Heart left ventricle (tissue), 16 donors: ENCODE measurements at regions of chr3 and their contacts with region 1.

Region 1: GRCh38 chr3:160929595-160929994 is 173.6 kb downstream of the PPM1L start:
- DNase-seq: peak; percentile 46 to 71 (median 67)
- ATAC-seq: peak; percentile 90 to 97 (median 92)
- H3K4me3 ChIP-seq: no peak overlapping the region
- H3K27ac ChIP-seq: no peak overlapping the region
- H3K4me1 ChIP-seq: peaks cover 0 to 31% (median 5%) of the 10 kb centered on the region in 12 donors
- H3K27me3 ChIP-seq: no peaks in the 10 kb centered on the region
- CTCF ChIP-seq: peak in 8 of 12 donors; percentile 10 to 53 (median 41)
- POLR2A ChIP-seq: no peak

Region 2: GRCh38 chr3:160707187-160707794 is 222.3 kb before region 1 on chr3:
- intact Hi-C with region 1: loop called in 1 of 10 experiments (anchors 5 kb)
- DNase-seq: peak in 2 of 5 donors; percentile 31 to 43
- ATAC-seq: peak; percentile 58 to 85 (median 72)
- H3K4me3 ChIP-seq: no peak overlapping the region
- H3K27ac ChIP-seq: no peak overlapping the region
- H3K4me1 ChIP-seq: peaks cover 0 to 3% (median 0%) of the 10 kb centered on the region in 12 donors
- H3K27me3 ChIP-seq: no peaks in the 10 kb centered on the region
- CTCF ChIP-seq: peak; percentile 43 to 78 (median 61)
- POLR2A ChIP-seq: no peak

Region 3: DNA sequence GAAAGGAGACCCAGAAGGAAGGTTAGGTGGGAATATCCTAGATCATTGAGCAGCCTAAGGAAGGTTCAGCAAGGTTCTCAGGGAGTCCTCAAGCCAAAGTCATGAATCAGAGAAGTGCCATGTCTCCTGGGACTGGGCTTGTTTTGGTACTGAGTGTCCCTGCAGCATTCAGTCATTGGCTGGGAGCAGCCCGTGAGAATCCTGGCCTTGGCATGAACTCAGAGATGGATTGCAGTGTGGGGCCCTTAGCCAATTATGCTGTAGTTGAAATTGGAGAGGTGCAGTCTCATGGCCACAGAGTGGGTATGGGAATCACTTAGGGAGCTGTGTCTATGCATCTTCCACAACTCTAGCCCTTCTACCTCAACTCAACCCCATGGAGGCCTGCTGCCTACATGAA is 190.5 kb before region 1 on chr3:
- intact Hi-C with region 1: loop called in 1 of 10 experiments (anchors 5 kb)
- DNase-seq: peak in 4 of 5 donors; percentile 39 to 66 (median 57)
- ATAC-seq: peak; percentile 93 to 96 (median 96)
- H3K4me3 ChIP-seq: no peak overlapping the region
- H3K27ac ChIP-seq: peak overlapping the region in 7 of 12 donors; percentile 36 to 63 (median 42)
- H3K4me1 ChIP-seq: peaks cover 0 to 23% (median 4%) of the 10 kb centered on the region in 12 donors
- H3K27me3 ChIP-seq: no peaks in the 10 kb centered on the region
- CTCF ChIP-seq: no peak
- POLR2A ChIP-seq: no peak

Region 4: GRCh38 chr3:160763073-160763472 is 166.5 kb before region 1 on chr3:
- intact Hi-C with region 1: loop called in 8 of 10 experiments (anchors 5 kb)
- DNase-seq: no peak
- ATAC-seq: no peak
- H3K4me3 ChIP-seq: no peak overlapping the region
- H3K27ac ChIP-seq: no peak overlapping the region
- H3K4me1 ChIP-seq: peaks cover 0 to 17% (median 2%) of the 10 kb centered on the region in 12 donors
- H3K27me3 ChIP-seq: no peaks in the 10 kb centered on the region
- CTCF ChIP-seq: no peak
- POLR2A ChIP-seq: no peak

Region 5: GRCh38 chr3:160837394-160837980 is 92.1 kb before region 1 on chr3:
- intact Hi-C with region 1: loop called in 1 of 10 experiments (anchors 10 kb)
- DNase-seq: no peak
- ATAC-seq: peak in 2 of 4 donors; percentile 10 to 36
- H3K4me3 ChIP-seq: no peak overlapping the region
- H3K27ac ChIP-seq: peak overlapping the region in 1 of 12 donors; percentile 12
- H3K4me1 ChIP-seq: peaks cover 0 to 17% (median under 1%) of the 10 kb centered on the region in 12 donors
- H3K27me3 ChIP-seq: no peaks in the 10 kb centered on the region
- CTCF ChIP-seq: no peak
- POLR2A ChIP-seq: no peak

Region 6: DNA sequence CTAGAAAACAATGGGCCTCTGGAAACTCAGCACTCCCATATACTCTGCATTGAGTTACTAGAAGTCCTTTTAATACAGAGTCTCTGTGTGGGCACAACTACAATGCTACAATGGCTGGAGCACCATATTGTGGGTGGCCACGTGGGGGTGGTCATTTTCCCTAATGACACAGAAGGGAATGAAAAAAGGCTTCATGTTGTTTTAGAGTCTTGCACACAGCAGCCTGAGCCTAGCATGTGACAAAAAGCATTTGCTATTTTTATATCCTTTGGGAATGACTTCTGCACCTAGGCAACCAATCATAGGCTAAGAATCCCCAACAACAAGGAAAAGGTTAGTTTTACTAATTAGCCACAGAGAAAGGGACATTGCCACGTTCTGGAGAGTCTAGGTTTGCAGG is 53.0 kb before region 1 on chr3:
- intact Hi-C with region 1: no loop called
- DNase-seq: no peak
- ATAC-seq: peak in 3 of 4 donors; percentile 43 to 53 (median 44)
- H3K4me3 ChIP-seq: no peak overlapping the region
- H3K27ac ChIP-seq: peak overlapping the region in 1 of 12 donors; percentile 15
- H3K4me1 ChIP-seq: peaks cover 0 to 28% (median 5%) of the 10 kb centered on the region in 12 donors
- H3K27me3 ChIP-seq: no peaks in the 10 kb centered on the region
- CTCF ChIP-seq: no peak
- POLR2A ChIP-seq: no peak

Region 7: DNA sequence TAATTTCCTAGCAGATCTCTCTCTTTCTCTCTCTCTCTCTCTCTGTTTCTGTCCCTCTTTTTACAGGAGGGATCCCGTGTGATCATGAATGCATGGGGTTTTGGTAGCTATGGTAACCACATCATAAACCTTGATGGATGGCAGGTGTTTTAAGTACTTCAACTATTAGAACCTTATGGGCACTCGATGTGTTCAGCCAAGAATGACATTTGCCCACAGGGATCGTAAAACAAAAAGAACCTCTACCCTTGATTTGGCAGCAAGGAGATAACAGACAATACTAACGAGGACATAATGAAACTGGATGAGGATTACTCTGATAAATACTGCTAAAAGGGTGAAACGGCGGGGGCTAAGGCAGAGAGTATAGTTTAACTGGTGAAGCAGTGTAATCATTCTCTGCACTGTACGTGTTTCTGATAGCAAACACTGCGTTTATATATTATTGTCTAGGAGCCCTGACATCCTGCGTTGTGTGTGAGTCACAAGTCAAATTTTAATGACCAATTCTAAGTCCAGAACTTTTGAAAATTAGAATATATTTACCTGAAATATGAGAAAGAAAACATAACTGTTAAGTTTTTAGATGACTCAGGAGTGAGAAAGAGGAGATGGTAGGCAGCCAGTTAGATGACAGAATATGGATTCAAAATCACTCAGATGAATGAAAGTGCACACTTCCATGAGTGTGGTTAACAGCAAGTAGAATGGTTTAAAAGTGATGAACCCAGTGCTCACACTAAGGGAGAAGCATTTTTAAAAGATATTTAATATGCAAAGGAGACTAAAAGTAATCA is 647.3 kb after region 1 on chr3:
- intact Hi-C with region 1: no loop called
- DNase-seq: no peak
- ATAC-seq: no peak
- H3K4me3 ChIP-seq: no peak overlapping the region
- H3K27ac ChIP-seq: no peak overlapping the region
- H3K4me1 ChIP-seq: no peaks in the 10 kb centered on the region
- H3K27me3 ChIP-seq: no peaks in the 10 kb centered on the region
- CTCF ChIP-seq: no peak
- POLR2A ChIP-seq: no peak